A673 (cell line): ENCODE measurements at regions of chr16 and their contacts with region 1.

Region 1: DNA sequence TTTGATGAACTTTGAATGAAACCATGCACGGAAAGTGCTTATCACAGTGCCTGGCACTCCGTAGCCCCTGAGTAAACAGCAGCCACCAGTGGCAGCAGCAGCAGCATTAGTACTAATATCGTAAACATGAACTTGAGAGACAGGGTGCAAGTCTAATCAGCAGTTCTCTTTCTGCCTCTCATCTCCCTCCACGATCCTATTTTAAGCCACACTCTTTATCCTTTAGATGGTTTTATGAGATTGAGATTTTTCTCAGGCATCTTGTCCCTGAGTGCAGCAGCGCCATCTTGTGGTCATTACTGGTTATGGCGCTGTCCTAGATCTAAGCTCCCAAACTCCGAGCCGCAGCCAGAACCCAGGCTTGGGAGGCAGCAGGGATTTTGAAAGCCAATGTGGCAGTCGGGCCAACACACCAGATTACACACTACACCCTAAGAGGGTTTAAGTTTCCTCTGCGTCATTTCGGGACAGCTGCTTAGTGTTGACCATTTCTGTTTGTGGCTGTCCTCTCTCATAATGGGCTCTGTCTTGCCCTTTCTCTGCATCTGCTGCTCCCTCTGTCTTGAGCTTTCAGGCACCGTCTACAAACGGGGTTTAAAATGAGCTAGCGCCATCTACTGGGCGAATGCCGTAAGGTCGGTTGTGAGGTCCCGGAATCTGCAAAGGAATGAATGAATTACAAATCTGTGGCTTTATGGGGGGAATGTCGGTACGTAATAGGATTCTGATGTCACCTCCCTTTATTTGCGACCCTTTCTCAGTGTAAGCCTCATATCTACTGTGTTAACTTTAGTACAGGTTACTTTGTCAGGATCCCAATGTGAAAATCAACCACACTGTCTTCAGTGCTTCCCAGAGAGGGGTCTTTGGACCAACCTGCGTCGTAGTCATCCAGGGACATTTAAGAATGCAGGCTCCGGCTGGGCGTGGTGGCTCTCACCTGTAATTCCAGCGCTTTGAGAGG is 64.5 kb downstream of the CYLD start:
- DNase-seq: peak; percentile 91
- H3K4me3 ChIP-seq: peak overlapping the region; percentile 43
- H3K27ac ChIP-seq: no peak overlapping the region
- H3K4me1 ChIP-seq: no peaks in the 10 kb centered on the region
- H3K27me3 ChIP-seq: no peaks in the 10 kb centered on the region
- CTCF ChIP-seq: peak; percentile 95

Region 2: DNA sequence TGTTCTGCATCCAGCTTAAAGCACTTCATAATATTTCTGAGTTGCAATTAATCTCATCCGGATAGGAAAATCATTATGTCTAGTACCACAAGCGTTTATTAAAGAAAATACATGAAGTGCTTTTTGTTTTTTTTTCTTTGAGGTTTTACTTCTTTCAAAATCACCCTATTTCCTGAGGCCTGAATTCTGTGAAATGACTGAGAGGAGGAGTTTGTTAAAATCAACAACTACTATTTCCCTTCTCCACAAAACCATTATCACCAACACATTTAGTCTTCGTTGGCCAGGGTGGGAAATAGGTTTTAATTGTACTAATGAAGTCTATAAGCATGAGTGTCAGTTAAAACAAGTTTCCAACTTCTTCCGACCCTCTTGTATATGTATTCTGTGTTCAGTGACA is 590.7 kb before region 1 on chr16:
- CTCF ChIA-PET with region 1: interaction called, 7 read pairs
- POLR2A ChIA-PET with region 1: no interaction called
- intact Hi-C with region 1: loop called (anchors 5 kb)
- DNase-seq: no peak
- H3K4me3 ChIP-seq: no peak overlapping the region
- H3K27ac ChIP-seq: no peak overlapping the region
- H3K4me1 ChIP-seq: no peaks in the 10 kb centered on the region
- H3K27me3 ChIP-seq: no peaks in the 10 kb centered on the region
- CTCF ChIP-seq: no peak

Region 3: GRCh38 chr16:50665128-50665878 is 141.1 kb before region 1 on chr16:
- CTCF ChIA-PET with region 1: interaction called, 6 read pairs
- POLR2A ChIA-PET with region 1: no interaction called
- intact Hi-C with region 1: loop called (anchors 1 kb)
- DNase-seq: peak; percentile 73
- H3K4me3 ChIP-seq: peak overlapping the region; percentile 37
- H3K27ac ChIP-seq: no peak overlapping the region
- H3K4me1 ChIP-seq: no peaks in the 10 kb centered on the region
- H3K27me3 ChIP-seq: no peaks in the 10 kb centered on the region
- CTCF ChIP-seq: peak; percentile 79